MCF 10A (cell line): ENCODE measurements at regions of chr22 and their contacts with region 1.

Region 1: GRCh38 chr22:46798366-46799350 is 36.2 kb downstream of the TBC1D22A start:
- DNase-seq: peak; percentile 61
- H3K4me3 Mint-ChIP-seq: no peak overlapping the region
- H3K27ac Mint-ChIP-seq: peak overlapping the region; percentile 43
- H3K4me1 Mint-ChIP-seq: peaks cover 16% of the 10 kb centered on the region
- H3K27me3 Mint-ChIP-seq: no peaks in the 10 kb centered on the region
- CTCF ChIP-seq: peak; percentile 95

Region 2: GRCh38 chr22:46335201-46336118 is 463.2 kb before region 1 on chr22 and contains the start of gene TRMU:
- CTCF ChIA-PET with region 1: no interaction called
- POLR2A ChIA-PET with region 1: no interaction called
- intact Hi-C with region 1: no loop called
- DNase-seq: peak; percentile 79
- H3K4me3 Mint-ChIP-seq: peak within 1 kb of the TSS; percentile 91
- H3K27ac Mint-ChIP-seq: peak within 1 kb of the TSS; percentile 89
- H3K4me1 Mint-ChIP-seq: peaks cover 14% of the 10 kb centered on the region
- H3K27me3 Mint-ChIP-seq: no peaks in the 10 kb centered on the region
- CTCF ChIP-seq: no peak
- total RNA-seq, gene TRMU: 46.6 and 48.7 TPM in 2 replicates

Region 3: GRCh38 chr22:46649141-46650077 is 149.2 kb before region 1 on chr22:
- CTCF ChIA-PET with region 1: no interaction called
- POLR2A ChIA-PET with region 1: no interaction called
- intact Hi-C with region 1: no loop called
- DNase-seq: no peak
- H3K4me3 Mint-ChIP-seq: no peak overlapping the region
- H3K27ac Mint-ChIP-seq: no peak overlapping the region
- H3K4me1 Mint-ChIP-seq: peaks cover 6% of the 10 kb centered on the region
- H3K27me3 Mint-ChIP-seq: no peaks in the 10 kb centered on the region
- CTCF ChIP-seq: no peak

Region 4: DNA sequence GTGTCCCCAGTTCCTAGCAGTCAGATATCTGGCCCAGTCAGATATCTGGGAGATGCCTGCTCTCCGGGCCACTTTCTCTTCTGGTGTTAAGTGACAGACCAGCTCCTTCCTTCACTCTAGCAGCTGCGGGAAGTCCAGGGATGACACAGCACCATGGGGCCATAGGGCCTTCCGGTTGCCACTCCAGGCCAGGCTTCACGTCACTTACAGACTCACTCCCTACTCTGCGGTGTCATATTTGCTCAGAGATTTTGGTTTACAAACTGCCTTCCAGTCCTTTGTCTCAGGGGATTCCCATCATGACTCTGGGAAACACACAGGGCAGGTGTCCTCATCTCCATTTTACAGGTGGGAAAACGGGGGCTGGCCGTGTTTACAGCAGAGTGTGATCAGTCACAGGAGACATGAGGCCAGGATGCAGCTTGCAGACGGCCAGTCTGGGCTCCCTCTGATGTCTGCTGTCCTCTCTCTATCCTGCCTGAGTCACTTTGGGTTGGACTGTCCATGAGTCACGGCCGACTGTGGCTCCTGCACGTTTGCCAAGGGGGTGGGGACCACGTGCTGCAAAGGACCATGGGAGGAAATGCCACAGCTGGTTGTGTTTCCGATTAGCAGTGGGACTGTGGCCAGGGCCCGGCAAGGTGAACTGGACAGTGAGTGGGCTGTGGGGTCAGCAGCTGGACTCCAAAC is 44.4 kb before region 1 on chr22:
- CTCF ChIA-PET with region 1: interaction called, 29 read pairs
- POLR2A ChIA-PET with region 1: interaction called, 3 read pairs
- intact Hi-C with region 1: loop called (anchors 2 kb)
- DNase-seq: peak; percentile 96
- H3K4me3 Mint-ChIP-seq: peak overlapping the region; percentile 71
- H3K27ac Mint-ChIP-seq: peak overlapping the region; percentile 98
- H3K4me1 Mint-ChIP-seq: peaks cover 20% of the 10 kb centered on the region
- H3K27me3 Mint-ChIP-seq: no peaks in the 10 kb centered on the region
- CTCF ChIP-seq: no peak

Region 5: DNA sequence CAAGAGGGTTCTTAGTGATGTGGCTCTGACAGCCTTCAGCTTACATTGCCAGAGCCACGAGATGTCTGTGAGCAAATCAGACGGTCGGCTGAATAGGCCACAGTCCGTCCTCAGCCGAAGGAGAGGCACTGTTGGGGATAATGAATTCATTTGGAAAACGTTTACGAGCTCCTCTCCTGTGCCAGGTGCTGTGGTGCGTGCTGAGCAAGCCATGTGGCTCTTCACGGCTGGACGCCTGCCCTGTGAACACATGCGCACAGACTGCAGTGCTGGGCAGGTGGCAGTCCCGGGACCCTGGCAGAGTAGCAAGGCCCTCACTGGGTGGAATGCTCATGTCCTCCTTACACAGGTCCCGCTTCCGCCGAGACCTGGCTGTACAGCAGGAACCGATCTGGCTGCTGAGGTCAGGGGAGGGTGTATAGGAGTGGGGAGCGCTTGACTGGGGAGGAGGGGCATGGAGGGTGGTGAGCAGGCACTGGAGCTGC is 29.4 kb before region 1 on chr22:
- CTCF ChIA-PET with region 1: interaction called, 25 read pairs
- POLR2A ChIA-PET with region 1: interaction called, 3 read pairs
- intact Hi-C with region 1: no loop called
- DNase-seq: no peak
- H3K4me3 Mint-ChIP-seq: no peak overlapping the region
- H3K27ac Mint-ChIP-seq: peak overlapping the region; percentile 23
- H3K4me1 Mint-ChIP-seq: peaks cover 18% of the 10 kb centered on the region
- H3K27me3 Mint-ChIP-seq: no peaks in the 10 kb centered on the region
- CTCF ChIP-seq: no peak

Region 6: DNA sequence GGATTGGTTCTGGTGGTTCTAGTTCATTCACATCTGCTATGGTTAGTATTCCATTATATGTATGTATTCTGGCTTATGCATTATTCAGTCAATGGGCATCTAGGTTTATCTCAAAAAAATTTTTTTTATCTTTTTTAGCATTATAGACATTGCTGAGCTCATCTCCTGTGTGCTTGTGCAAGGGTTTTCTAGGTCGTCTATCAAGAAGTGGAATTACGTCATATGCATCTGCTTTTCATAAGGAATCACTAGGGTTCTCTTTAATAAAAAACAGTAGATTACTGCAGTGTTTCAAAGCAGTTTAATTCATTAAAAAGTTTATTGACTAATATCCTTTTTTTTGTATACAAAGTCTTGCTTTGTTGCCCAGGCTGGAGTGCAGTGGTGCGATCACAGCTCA is 14.9 kb before region 1 on chr22:
- CTCF ChIA-PET with region 1: interaction called, 18 read pairs
- POLR2A ChIA-PET with region 1: interaction called, 4 read pairs
- intact Hi-C with region 1: no loop called
- DNase-seq: no peak
- H3K4me3 Mint-ChIP-seq: no peak overlapping the region
- H3K27ac Mint-ChIP-seq: no peak overlapping the region
- H3K4me1 Mint-ChIP-seq: no peaks in the 10 kb centered on the region
- H3K27me3 Mint-ChIP-seq: no peaks in the 10 kb centered on the region
- CTCF ChIP-seq: no peak

Region 7: DNA sequence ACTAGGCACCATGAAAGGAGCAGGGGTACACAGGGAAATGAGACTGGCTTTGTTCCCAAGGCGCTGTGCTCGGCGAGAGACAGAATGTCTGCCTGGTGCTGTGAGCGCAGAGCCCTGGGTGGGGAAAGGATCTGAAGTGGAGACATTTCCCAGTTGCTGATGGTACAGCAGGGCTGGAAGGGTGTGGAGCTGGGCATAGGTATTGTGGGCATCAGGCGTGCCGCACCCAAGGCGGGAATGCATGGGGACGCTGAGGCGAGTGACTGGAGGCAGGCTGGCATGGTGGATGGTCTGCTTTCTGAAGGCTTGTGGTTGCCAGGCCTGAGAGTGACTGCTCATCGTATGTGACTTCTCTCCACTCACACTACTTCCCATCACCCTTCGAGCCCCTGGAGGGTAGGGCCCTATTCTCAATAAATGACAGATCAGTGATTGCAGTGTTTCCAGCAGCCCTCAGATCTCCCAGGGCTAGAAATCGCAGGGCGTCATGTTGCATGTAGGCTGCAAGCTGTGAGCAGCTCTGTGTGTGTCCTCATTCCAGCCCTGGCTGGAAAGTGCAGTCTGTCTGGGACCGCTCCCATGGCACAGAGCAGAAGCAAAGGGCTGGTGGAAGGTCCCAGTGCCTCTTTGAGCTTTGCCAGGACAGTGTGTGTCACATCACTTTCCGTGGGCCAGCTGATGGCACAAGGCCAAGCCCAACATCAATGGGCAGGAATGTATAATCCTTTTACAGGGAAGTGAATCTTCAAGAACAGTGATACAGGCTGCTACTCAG is 31.5 kb after region 1 on chr22:
- CTCF ChIA-PET with region 1: interaction called, 31 read pairs
- POLR2A ChIA-PET with region 1: interaction called, 3 read pairs
- intact Hi-C with region 1: no loop called
- DNase-seq: peak; percentile 55
- H3K4me3 Mint-ChIP-seq: peak overlapping the region; percentile 59
- H3K27ac Mint-ChIP-seq: peak overlapping the region; percentile 95
- H3K4me1 Mint-ChIP-seq: peaks cover 41% of the 10 kb centered on the region
- H3K27me3 Mint-ChIP-seq: no peaks in the 10 kb centered on the region
- CTCF ChIP-seq: no peak

Region 8: DNA sequence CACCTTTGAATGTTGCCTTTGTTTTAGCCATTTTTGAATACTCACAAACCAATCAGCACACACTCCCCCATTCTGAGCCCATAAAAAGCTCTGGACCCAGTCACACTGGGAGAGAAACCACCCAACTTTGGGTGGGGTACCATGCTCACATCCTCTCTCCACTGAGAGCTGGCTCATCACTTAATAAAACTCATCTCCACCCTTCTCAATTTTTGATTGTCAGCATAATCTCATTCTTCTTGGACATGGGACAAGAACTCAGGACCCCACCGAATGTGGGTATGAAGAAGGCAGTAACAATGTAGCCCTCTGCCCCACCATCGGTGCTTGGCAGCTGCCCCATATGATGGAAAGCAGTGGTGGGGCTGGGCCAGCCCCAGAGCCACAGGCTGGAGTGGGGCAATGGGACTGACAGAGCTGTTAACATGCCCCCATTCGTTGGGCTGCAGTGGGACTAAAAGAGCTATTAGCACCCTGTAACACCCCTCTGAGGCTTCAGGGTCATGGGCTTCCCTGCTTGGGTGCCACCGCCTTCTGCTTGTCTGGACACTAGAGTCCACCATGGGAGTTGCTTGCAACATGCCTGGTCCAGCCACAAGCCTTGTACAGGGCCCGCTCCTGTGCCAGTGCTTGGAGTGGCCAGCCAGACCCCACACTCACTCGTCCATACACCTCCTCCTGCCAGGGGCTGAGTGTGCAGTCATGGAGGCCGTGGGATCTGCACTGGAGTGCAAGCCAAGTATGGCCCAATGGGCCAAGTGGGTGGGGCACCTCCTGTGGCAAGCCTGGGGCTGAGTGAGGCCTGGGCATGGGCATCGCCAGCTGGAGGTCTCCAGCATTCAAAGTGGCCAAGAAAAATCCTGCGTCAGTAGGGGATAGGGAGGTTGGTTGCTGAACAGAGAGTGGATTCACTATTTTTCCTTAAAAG is 434.9 kb after region 1 on chr22:
- CTCF ChIA-PET with region 1: no interaction called
- POLR2A ChIA-PET with region 1: no interaction called
- intact Hi-C with region 1: no loop called
- DNase-seq: no peak
- H3K4me3 Mint-ChIP-seq: no peak overlapping the region
- H3K27ac Mint-ChIP-seq: no peak overlapping the region
- H3K4me1 Mint-ChIP-seq: no peaks in the 10 kb centered on the region
- H3K27me3 Mint-ChIP-seq: peaks cover 34% of the 10 kb centered on the region
- CTCF ChIP-seq: no peak

Region 9: DNA sequence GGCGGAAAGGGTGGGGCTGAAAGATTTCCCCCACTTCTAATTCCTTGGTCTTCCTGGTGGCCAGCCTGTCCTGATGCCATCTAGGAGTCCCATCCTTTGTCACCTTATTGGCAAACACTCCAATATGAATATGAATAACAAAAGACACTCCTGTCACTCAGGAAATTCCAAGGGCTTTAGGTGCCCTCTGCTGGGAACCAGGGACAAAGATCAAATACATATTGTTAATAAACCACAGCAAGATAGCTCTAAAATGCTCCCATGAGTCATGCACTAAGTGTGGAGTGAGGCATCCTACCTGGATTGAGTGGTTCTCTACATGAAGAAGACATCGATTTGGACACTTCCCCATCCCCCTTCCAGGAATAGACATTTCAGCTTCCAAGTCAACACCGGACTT is 787.4 kb after region 1 on chr22:
- CTCF ChIA-PET with region 1: interaction called, 3 read pairs
- POLR2A ChIA-PET with region 1: no interaction called
- intact Hi-C with region 1: loop called (anchors 5 kb)
- DNase-seq: no peak
- H3K4me3 Mint-ChIP-seq: no peak overlapping the region
- H3K27ac Mint-ChIP-seq: no peak overlapping the region
- H3K4me1 Mint-ChIP-seq: peaks cover 7% of the 10 kb centered on the region
- H3K27me3 Mint-ChIP-seq: no peaks in the 10 kb centered on the region
- CTCF ChIP-seq: peak; percentile 20